Calu3 (cell line): ENCODE measurements at regions of chr2 and their contacts with region 1.

Region 1: DNA sequence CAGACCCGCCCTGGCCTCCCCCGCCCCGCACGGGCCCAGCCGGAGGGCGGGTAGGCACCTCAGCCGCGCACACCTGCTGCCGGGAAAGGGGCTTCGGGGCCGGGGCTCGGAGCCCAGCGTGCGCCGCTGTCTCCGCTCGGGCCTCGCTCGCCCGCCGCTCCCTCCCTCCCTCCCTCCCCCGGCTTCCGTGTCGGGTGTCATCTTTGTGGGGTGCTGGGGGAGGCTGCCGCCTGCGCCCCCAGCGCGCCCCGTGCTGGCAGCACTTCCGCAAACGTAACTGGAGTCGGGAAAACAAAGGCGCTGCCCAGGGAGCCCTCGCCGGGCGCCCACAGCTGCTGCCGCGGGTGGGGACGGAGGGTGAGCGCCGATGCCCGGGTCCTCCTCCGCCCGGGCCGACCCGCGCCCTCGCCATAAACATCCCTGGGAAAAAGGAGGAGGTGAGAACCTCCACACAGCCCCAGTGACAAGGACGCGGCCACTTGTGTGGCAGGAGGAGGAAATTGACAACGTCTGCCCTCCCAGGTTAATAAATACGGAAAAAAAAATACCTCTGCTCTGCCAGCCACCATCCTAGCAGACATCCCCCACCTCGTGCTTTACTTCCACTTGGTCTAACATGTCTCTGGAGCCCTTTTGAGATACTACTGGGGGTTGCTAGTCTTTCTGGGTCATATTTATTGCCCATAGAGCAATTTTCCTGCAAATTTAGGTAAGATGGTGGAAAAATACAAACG is 550 bp downstream of the MFSD6 start:
- DNase-seq: peak; percentile 66
- H3K4me3 Mint-ChIP-seq: peak overlapping the region; percentile 69
- H3K27ac Mint-ChIP-seq: peak overlapping the region; percentile 38
- H3K4me1 Mint-ChIP-seq: peaks cover 16% of the 10 kb centered on the region
- H3K27me3 Mint-ChIP-seq: no peaks in the 10 kb centered on the region
- CTCF ChIP-seq: no peak

Region 2: GRCh38 chr2:190468814-190469569 is 60.3 kb after region 1 on chr2:
- CTCF ChIA-PET with region 1: no interaction called
- intact Hi-C with region 1: loop called (anchors 2 kb)
- DNase-seq: peak; percentile 73
- H3K4me3 Mint-ChIP-seq: no peak overlapping the region
- H3K27ac Mint-ChIP-seq: peak overlapping the region; percentile 76
- H3K4me1 Mint-ChIP-seq: peaks cover 36% of the 10 kb centered on the region
- H3K27me3 Mint-ChIP-seq: no peaks in the 10 kb centered on the region
- CTCF ChIP-seq: no peak